Activated CD4-positive, alpha-beta memory T cell treated with anti-CD3 and anti-CD28 coated beads for 36 hours (primary cell): ENCODE measurements at regions of chr2 and their contacts with region 1.

Region 1: GRCh38 chr2:203814661-203815540 is 52.7 kb upstream of the CTLA4 start:
- DNase-seq: peak; percentile 69
- H3K4me3 Mint-ChIP-seq: peak overlapping the region; percentile 60
- H3K27ac Mint-ChIP-seq: peak overlapping the region; percentile 58
- H3K4me1 Mint-ChIP-seq: peaks cover 56% of the 10 kb centered on the region
- H3K27me3 Mint-ChIP-seq: no peaks in the 10 kb centered on the region

Region 2: GRCh38 chr2:202831242-202832220 is 983.4 kb before region 1 on chr2:
- CTCF ChIA-PET with region 1: no interaction called
- POLR2A ChIA-PET with region 1: no interaction called
- intact Hi-C with region 1: loop called (anchors 1 kb)
- DNase-seq: peak; percentile 70
- H3K4me3 Mint-ChIP-seq: no peak overlapping the region
- H3K27ac Mint-ChIP-seq: no peak overlapping the region
- H3K4me1 Mint-ChIP-seq: peaks cover 15% of the 10 kb centered on the region
- H3K27me3 Mint-ChIP-seq: no peaks in the 10 kb centered on the region

Region 3: DNA sequence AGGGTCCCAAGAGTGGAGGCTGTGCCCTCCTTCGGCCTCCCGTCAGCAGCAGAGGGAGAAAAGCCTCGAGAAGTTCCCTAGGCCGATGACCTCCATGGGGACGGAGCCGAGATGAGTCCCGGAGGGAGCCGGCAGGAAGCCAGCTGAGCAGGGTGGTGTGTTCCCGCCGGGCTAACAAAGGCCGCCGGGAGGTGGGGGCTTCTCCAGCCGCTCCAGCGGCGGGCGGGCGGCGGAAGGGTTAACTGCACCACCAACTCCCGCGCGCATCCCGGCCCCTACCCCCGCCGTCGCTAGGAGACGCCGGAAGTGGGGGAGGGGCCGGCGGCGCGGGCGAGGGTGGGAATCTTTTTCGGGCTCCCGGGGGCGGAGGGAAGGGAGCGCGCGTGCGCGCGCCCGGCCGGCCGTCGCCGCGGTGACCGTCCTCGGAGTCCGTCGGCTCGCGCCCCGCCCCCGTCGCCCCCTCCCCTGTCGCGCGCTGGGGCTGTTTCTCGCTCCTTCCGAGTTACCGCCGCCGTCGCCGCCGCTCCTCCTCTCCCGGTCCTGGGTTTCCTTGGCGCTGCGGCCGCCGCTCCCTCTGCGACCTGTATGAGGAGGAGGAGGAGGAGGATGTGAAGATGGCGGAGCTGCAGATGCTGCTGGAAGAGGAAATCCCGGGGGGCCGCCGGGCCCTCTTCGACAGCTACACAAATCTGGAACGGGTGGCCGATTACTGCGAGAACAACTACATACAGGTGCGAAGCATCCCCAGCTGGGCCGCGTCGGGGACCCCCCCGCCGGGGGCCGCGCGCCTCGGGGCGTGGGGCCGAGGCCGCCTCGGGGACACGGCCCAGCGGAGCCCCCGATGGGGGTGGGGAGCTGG is 486.8 kb before region 1 on chr2 and contains the start of gene ABI2:
- CTCF ChIA-PET with region 1: no interaction called
- POLR2A ChIA-PET with region 1: no interaction called
- intact Hi-C with region 1: loop called (anchors 10 kb)
- DNase-seq: peak; percentile 76
- H3K4me3 Mint-ChIP-seq: peak within 1 kb of the TSS; percentile 86
- H3K27ac Mint-ChIP-seq: peak within 1 kb of the TSS; percentile 79
- H3K4me1 Mint-ChIP-seq: peaks cover 33% of the 10 kb centered on the region
- H3K27me3 Mint-ChIP-seq: no peaks in the 10 kb centered on the region
- total RNA-seq, gene ABI2: 43.7 to 51.2 TPM

Region 4: DNA sequence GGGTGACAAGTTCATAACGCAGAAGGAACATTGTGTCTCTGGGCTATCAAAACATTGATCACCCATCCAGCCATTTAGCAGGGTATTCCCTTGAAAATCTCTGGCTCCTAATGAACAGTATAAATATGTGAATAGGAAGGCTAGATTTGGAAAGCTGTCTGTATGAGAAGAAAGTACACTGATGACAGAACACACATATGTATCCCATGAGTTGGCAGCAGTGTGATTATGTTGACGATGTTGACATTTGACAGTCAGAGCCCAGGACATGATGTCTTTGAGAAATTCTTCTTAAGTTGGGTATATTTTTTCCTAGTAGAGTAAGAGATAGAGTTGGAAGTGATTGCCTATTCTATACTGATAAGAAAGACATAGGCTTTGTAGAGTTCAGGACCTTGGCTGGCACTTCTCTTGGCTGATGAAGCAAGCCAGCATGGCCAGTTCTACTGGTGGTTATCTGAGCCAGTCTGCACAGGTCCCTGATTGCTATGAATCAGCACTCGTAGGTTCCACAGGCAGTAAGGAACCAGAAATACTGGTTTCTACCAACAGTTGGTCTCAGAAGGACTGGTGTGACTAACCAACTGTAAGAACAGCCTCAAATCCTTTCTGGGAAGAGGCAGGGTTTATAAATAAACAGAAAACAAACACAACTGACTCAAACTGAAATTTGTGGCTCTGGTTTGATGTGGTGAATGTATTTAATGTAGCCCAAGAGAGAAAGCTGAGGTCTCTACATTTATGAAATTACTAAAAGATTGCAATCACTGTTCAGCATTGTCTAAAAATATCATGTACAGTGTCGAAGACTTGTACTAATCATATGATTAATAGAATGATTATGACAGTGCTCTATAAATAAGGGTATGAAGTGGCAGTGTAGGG is 235.9 kb before region 1 on chr2:
- CTCF ChIA-PET with region 1: interaction called, 4 read pairs
- POLR2A ChIA-PET with region 1: no interaction called
- intact Hi-C with region 1: loop called (anchors 2 kb)
- DNase-seq: peak; percentile 72
- H3K4me3 Mint-ChIP-seq: no peak overlapping the region
- H3K27ac Mint-ChIP-seq: peak overlapping the region; percentile 16
- H3K4me1 Mint-ChIP-seq: peaks cover 29% of the 10 kb centered on the region
- H3K27me3 Mint-ChIP-seq: peaks cover 12% of the 10 kb centered on the region

Region 5: DNA sequence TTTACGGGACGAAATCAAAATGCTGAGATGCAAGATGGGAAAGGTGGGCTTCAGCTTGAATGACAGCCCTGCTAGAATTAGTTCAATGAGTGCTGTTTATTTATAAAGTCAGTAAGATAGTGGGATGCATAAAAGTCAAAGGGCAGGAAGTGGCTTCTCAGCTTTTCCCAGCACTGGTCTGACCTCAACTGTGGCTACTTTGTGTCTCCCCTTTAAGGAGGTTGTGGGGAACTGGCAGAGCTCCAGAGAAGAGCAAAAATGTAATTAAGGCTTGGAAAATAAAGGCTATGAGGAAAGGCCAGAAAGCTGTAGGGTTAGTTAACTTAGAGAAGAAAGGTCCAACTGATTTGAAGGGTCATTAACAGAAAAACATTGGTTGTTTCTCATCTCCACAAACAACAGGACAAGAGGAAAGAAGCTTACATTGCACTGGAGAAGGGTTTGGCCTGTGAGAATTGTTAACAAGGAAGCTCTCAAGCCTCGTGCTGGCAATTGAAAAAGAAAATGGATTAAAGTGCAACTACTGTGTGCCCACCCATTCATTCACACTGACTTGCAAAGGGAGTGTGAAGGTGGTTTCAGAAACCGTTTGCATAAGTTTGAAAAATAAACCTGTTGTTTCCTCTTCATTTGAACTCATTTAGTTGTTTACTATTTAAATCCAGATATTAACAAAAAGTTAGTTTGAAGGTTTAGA is 177.3 kb before region 1 on chr2:
- CTCF ChIA-PET with region 1: no interaction called
- POLR2A ChIA-PET with region 1: no interaction called
- intact Hi-C with region 1: no loop called
- DNase-seq: no peak
- H3K4me3 Mint-ChIP-seq: no peak overlapping the region
- H3K27ac Mint-ChIP-seq: no peak overlapping the region
- H3K4me1 Mint-ChIP-seq: peaks cover 15% of the 10 kb centered on the region
- H3K27me3 Mint-ChIP-seq: no peaks in the 10 kb centered on the region

Region 6: DNA sequence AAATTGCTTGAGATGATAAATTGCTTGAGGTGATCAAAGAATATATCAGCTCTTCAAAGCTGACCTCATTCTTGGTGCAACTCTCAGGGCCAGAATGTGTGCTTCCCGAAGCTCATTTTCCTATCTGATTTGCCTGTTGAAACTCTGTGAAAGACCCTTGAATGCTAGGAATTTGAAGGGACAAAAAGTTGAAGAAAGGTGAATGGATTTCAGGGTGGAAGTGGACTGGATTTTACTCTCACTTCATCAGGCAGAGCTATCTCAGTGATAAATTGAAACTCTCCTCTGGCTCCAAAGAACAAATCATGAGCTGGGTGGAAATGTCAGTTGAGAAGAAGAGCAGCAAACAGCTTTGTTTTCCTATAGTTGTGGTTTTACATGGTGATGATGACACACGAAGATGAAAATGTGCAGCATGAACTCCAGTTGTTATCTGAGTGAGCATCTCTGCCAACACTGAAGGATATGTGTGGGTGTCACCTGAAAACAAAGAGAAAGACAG is 74.1 kb before region 1 on chr2:
- CTCF ChIA-PET with region 1: interaction called, 19 read pairs
- POLR2A ChIA-PET with region 1: interaction called, 25 read pairs
- intact Hi-C with region 1: loop called (anchors 1 kb)
- DNase-seq: peak; percentile 65
- H3K4me3 Mint-ChIP-seq: peak overlapping the region; percentile 58
- H3K27ac Mint-ChIP-seq: peak overlapping the region; percentile 99
- H3K4me1 Mint-ChIP-seq: peaks cover 90% of the 10 kb centered on the region
- H3K27me3 Mint-ChIP-seq: no peaks in the 10 kb centered on the region

Region 7: GRCh38 chr2:203804070-203804469 is 10.8 kb before region 1 on chr2:
- CTCF ChIA-PET with region 1: interaction called, 39 read pairs
- POLR2A ChIA-PET with region 1: interaction called, 18 read pairs
- intact Hi-C with region 1: loop called (anchors 1 kb)
- DNase-seq: peak; percentile 63
- H3K4me3 Mint-ChIP-seq: no peak overlapping the region
- H3K27ac Mint-ChIP-seq: peak overlapping the region; percentile 11
- H3K4me1 Mint-ChIP-seq: peaks cover 83% of the 10 kb centered on the region
- H3K27me3 Mint-ChIP-seq: no peaks in the 10 kb centered on the region

Region 8: GRCh38 chr2:203887677-203888076 is 72.8 kb after region 1 on chr2:
- CTCF ChIA-PET with region 1: interaction called, 7 read pairs
- POLR2A ChIA-PET with region 1: interaction called, 11 read pairs
- intact Hi-C with region 1: loop called (anchors 2 kb)
- DNase-seq: no peak
- H3K4me3 Mint-ChIP-seq: no peak overlapping the region
- H3K27ac Mint-ChIP-seq: peak overlapping the region; percentile 90
- H3K4me1 Mint-ChIP-seq: peaks cover 84% of the 10 kb centered on the region
- H3K27me3 Mint-ChIP-seq: peaks cover 2% of the 10 kb centered on the region